HEK293 (cell line): ENCODE measurements at regions of chr17 and their contacts with region 1.

Region 1: DNA sequence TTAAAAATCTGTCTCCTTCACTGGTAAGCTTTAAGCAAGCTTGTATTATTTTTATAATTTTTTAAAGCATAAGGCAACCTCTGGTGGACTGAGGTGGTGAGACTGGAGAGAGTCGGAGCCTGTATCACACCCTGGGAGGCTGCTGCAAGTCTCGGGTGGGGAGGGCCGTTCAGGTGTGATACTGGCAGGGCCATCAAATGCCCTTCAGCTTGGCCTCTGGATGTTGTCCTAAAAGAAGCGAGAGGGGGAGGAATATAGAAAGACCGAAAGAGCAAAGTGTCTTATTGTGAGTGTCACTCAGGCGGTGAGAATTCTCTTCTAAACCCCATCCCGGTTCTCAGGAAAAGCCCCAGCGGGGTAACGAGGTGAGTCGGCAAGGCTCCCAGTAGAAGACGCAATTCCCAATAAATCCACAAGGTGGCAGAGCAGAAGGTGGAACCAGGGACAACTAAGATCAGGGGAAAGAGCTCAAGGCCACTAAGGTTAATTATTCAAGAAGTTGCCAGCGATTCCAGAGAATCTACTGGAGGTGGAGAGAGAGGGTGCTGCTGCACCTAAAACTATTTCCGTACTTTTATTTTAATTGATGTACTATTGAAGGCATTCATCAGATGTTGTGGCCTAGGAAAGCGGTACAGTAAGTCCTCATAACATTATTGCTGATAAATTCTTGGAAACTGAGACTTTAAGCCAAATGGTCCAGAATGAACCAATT is 14.1 kb downstream of the C17orf67 start:
- H3K4me3 ChIP-seq: no peak overlapping the region
- H3K27ac ChIP-seq: no peak overlapping the region
- H3K4me1 ChIP-seq: peaks cover 2% of the 10 kb centered on the region; the same call in 1 of the 2 replicates
- CTCF ChIP-seq: peak; percentile 62; the same call in 1 of the 2 replicates

Region 2: DNA sequence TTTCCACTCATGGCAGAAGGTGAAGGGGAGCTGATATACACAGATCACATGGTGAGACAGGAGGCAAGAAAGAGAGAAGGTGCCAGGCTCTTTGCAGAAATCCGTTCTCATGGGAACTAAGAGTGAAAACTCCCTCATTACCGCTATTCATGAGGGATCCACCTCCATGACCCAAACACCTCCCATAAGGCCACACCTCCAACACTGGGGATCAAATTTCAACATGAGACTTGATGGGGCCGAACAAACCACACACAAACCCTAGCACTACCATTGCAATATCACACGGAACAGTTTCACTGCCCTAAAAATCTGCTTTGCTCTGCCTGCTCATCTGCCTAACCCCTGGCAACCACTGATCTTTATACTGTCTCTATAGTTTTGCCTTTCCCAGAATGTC is 20.7 kb before region 1 on chr17:
- CTCF ChIA-PET with region 1: interaction called, 20 read pairs
- POLR2A ChIA-PET with region 1: no interaction called
- H3K4me3 ChIP-seq: no peak overlapping the region
- H3K27ac ChIP-seq: no peak overlapping the region
- H3K4me1 ChIP-seq: peaks cover 9% of the 10 kb centered on the region; the same call in 1 of the 2 replicates
- CTCF ChIP-seq: no peak

Region 3: DNA sequence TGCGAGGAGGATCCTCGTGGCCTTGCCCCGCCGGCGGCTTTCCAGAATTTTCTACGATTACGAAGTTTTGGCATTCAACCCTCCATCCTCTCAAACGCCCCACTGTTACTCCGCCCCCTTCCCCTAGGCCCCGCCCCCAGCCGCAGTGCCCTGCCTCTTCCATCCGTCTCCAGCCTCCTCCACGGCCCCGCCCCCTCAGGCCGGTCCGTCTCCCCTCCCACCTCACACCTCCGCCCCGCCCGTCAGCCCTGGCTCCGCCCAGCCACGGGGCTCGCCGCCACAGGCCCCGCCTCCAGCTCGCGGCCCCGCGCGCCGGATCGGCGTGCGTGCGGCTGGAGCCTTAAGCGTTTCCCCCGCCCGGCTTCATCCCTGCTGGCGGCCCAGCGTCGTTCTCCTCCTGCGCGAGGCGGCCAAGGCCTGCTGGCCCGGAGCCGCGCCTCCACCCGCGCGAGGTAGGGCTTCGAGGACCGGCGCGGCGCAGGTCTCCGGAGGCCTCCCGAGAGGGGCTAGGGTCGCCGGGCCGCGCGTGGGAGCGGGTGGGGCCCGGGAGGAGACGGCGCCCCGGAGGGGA is 14.3 kb after region 1 on chr17 and contains the starts of genes C17orf67 and DGKE:
- CTCF ChIA-PET with region 1: interaction called, 38 read pairs
- POLR2A ChIA-PET with region 1: interaction called, 7 read pairs
- H3K4me3 ChIP-seq: peak within 1 kb of the TSS; percentile 69
- H3K27ac ChIP-seq: peak within 1 kb of the TSS; percentile 95
- H3K4me1 ChIP-seq: peaks cover 23% of the 10 kb centered on the region
- CTCF ChIP-seq: no peak

Region 4: GRCh38 chr17:56887550-56888467 is 68.2 kb after region 1 on chr17:
- CTCF ChIA-PET with region 1: no interaction called
- POLR2A ChIA-PET with region 1: no interaction called
- H3K4me3 ChIP-seq: no peak overlapping the region
- H3K27ac ChIP-seq: no peak overlapping the region
- H3K4me1 ChIP-seq: no peaks in the 10 kb centered on the region
- CTCF ChIP-seq: no peak

Region 5: GRCh38 chr17:56913864-56914640 is 94.5 kb after region 1 on chr17 and contains the start of gene TRIM25:
- CTCF ChIA-PET with region 1: interaction called, 5 read pairs
- POLR2A ChIA-PET with region 1: interaction called, 10 read pairs
- H3K4me3 ChIP-seq: peak within 1 kb of the TSS; percentile 92
- H3K27ac ChIP-seq: peak within 1 kb of the TSS; percentile 75
- H3K4me1 ChIP-seq: peaks cover 4% of the 10 kb centered on the region
- CTCF ChIP-seq: no peak

Region 6: GRCh38 chr17:56939901-56940343 is 120.3 kb after region 1 on chr17:
- CTCF ChIA-PET with region 1: interaction called, 32 read pairs
- POLR2A ChIA-PET with region 1: no interaction called
- H3K4me3 ChIP-seq: no peak overlapping the region
- H3K27ac ChIP-seq: no peak overlapping the region
- H3K4me1 ChIP-seq: no peaks in the 10 kb centered on the region
- CTCF ChIP-seq: peak; percentile 51

Region 7: GRCh38 chr17:57455063-57455914 is 635.7 kb after region 1 on chr17:
- CTCF ChIA-PET with region 1: no interaction called
- POLR2A ChIA-PET with region 1: no interaction called
- H3K4me3 ChIP-seq: no peak overlapping the region
- H3K27ac ChIP-seq: no peak overlapping the region
- H3K4me1 ChIP-seq: no peaks in the 10 kb centered on the region
- CTCF ChIP-seq: no peak